Heart right ventricle (tissue), 16 donors: ENCODE measurements at regions of chr6 and their contacts with region 1.

Region 1: DNA sequence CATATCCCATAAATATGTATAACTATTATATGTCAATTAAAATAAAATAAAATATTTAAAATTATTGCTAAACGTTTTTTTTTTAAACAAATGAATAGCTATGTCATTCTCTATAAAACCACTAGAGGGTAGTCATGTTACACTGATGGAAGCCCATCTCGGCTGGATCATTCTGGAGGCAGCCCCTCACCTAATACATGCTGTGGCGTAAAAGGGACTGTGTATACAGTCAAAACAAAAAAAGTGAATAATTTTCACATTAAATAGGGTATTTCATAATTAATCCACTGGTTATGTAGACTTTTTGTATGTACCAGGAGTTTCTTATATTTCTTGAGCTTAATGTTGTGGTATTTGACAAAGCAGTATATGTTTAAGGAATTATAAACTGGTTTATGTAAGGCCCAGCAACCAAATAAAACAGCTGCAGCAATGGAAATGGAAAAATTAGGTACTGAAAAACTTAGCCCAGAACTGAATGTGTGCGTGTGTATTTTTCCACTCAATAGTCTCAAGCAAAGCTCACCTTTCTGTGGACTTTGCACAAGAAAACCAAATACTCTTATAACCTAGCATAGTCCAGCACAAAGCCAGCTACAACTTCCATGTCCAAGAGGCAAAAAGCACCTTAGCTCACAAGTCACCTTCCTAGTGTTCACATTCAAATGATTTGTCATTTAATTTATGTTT is 81.7 kb downstream of the COL9A1 start:
- DNase-seq: no peak
- ATAC-seq: peak in 1 of 8 donors; percentile 69
- H3K4me3 ChIP-seq: no peak overlapping the region
- H3K27ac ChIP-seq: no peak overlapping the region
- H3K4me1 ChIP-seq: peaks cover 0 to 6% (median 0%) of the 10 kb centered on the region in 9 donors
- H3K27me3 ChIP-seq: peaks cover 0 to 7% (median 0%) of the 10 kb centered on the region in 7 donors
- CTCF ChIP-seq: peak; percentile 63 to 86 (median 75)

Region 2: DNA sequence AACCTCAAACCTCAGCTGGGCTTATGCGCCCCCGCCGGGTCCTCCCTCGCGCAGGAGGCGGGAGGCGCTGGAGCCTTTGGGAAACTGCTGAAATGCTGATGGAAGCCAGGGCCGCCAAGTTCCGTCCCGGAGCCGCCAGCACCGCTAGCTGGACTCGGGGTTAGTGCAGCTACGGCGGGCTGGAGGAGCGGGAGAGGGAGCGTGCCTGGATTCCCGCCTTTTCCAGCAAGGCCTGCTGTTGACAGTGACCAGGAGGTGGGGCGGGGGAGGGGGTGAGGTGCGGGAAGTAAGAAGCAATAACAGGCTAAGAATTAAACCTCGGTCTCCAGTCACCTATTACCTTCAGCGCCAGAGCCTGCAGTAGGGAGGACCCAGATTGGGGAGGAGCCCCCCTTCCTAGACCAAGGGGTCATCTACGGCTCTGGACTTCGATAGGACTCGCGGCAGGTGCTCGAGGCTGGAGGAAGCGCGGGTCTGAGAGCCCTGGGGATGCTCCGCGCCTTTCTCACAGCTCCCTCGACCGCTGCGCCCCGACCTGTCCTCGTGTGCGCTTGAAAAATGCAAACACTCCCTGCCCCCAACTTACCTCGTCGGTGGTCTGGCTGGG is 61.2 kb after region 1 on chr6:
- intact Hi-C with region 1: loop called in 2 of 10 experiments (anchors 5 kb)
- DNase-seq: peak; percentile 33 to 47
- ATAC-seq: peak; percentile 55 to 84 (median 75)
- H3K4me3 ChIP-seq: peak overlapping the region in 8 of 10 donors; percentile 17 to 41 (median 37)
- H3K27ac ChIP-seq: peak overlapping the region in 1 of 10 donors; percentile 33
- H3K4me1 ChIP-seq: peaks cover 0 to 20% (median 8%) of the 10 kb centered on the region in 9 donors
- H3K27me3 ChIP-seq: peaks cover 0 to 53% (median 36%) of the 10 kb centered on the region in 7 donors
- CTCF ChIP-seq: no peak

Region 3: GRCh38 chr6:70299456-70299855 is 78.3 kb after region 1 on chr6:
- intact Hi-C with region 1: loop called in 1 of 10 experiments (anchors 5 kb)
- DNase-seq: no peak
- ATAC-seq: no peak
- H3K4me3 ChIP-seq: no peak overlapping the region
- H3K27ac ChIP-seq: no peak overlapping the region
- H3K4me1 ChIP-seq: peaks cover 0 to 7% (median 0%) of the 10 kb centered on the region in 9 donors
- H3K27me3 ChIP-seq: peaks cover 0 to 19% (median 0%) of the 10 kb centered on the region in 7 donors
- CTCF ChIP-seq: no peak

Region 4: GRCh38 chr6:70310063-70310694 is 89.0 kb after region 1 on chr6:
- intact Hi-C with region 1: loop called in 2 of 10 experiments (anchors 5 kb)
- DNase-seq: no peak
- ATAC-seq: no peak
- H3K4me3 ChIP-seq: no peak overlapping the region
- H3K27ac ChIP-seq: no peak overlapping the region
- H3K4me1 ChIP-seq: peaks cover 0 to 6% (median 0%) of the 10 kb centered on the region in 9 donors
- H3K27me3 ChIP-seq: peaks cover 0 to 11% (median 0%) of the 10 kb centered on the region in 7 donors
- CTCF ChIP-seq: peak; percentile 31 to 77 (median 63)

Region 5: GRCh38 chr6:70369332-70369950 is 148.3 kb after region 1 on chr6:
- intact Hi-C with region 1: loop called in 8 of 10 experiments (anchors 2 to 10 kb)
- DNase-seq: peak; percentile 55 to 57
- ATAC-seq: peak in 7 of 8 donors; percentile 65 to 79 (median 75)
- H3K4me3 ChIP-seq: no peak overlapping the region
- H3K27ac ChIP-seq: no peak overlapping the region
- H3K4me1 ChIP-seq: peaks cover 0 to 3% (median 0%) of the 10 kb centered on the region in 9 donors
- H3K27me3 ChIP-seq: peaks cover 0 to 24% (median 0%) of the 10 kb centered on the region in 7 donors
- CTCF ChIP-seq: peak; percentile 75 to 96 (median 91)

Region 6: GRCh38 chr6:71012866-71013469 is 791.8 kb after region 1 on chr6:
- intact Hi-C with region 1: loop called in 3 of 10 experiments (anchors 5 kb)
- DNase-seq: peak in 1 of 2 donors; percentile 36
- ATAC-seq: peak in 6 of 8 donors; percentile 55 to 87 (median 76)
- H3K4me3 ChIP-seq: no peak overlapping the region
- H3K27ac ChIP-seq: no peak overlapping the region
- H3K4me1 ChIP-seq: no peaks in the 10 kb centered on the region
- H3K27me3 ChIP-seq: no peaks in the 10 kb centered on the region
- CTCF ChIP-seq: peak; percentile 49 to 82 (median 78)